ENCODE measurements at regions of chr4 and their contacts with region 1.

Region 1: DNA sequence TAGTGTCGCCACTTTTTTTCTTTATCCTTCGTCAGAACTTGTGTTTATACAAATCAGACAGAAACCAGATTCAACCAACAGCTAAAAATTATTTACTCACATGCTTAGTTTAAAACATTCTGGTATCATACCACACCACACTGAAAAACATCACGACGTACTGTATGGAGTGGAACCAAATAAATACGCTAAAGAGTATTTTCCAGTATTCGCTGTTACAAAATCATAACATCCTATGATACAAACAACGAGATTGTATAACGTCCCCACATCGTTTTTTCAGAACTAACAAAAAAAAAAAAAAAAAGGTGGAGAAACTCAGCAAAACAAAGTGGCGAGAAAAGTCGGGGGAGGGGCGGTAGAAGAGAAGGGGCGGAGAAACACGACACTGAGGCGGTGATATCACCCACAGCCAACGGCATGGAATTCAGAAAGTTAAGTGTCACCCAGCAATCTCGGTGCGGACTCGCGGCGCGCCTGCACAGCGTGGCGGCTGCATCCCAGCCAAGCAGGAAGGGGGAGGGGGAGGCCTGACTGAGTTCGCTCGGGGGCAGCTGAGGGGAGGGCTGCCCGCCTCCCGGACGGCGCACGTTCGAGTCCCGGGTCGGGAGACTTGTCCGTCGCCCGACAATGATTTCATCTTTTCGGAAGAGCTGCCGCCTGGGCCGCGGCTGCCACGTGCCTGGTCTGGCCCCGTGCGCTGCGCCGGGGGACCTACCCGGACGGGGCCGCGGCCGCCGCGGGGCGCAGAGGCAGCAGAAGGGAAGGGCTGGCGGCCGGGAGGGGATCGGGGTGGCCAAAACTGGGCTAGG is 920 bp downstream of the SETD7 start:
- DNase-seq: peak; percentile 93 to 96
- H3K4me3 ChIP-seq: peak overlapping the region; percentile 78 to 98
- H3K27ac ChIP-seq: peak overlapping the region; percentile 96 to 100
- H3K4me1 ChIP-seq: peaks cover 0 to 59% (median 34%) of the 10 kb centered on the region in 4 donors
- H3K27me3 ChIP-seq: no peaks in the 10 kb centered on the region
- CTCF ChIP-seq: peak in 1 of 2 experiments; percentile 5

Region 2: DNA sequence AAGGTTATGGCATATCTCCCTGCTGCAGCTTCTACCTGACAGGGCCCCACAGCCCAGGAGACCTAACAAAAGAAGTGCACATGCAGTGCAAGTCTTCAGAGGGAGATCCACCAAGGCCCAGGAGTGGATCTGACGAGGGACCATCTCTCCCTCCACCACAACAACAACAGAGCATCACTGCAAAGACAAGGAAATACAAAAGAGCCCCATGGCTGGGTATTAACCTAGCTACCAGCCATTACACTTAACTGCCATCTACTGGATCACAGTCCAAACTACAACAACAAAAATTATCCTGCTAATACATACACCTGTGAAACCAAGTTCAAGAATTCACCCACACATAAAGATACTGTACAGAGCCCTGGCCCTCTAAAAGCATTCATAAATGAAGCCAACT is 1032.7 kb before region 1 on chr4:
- intact Hi-C with region 1: no loop called
- DNase-seq: no peak
- H3K4me3 ChIP-seq: no peak overlapping the region
- H3K27ac ChIP-seq: no peak overlapping the region
- H3K4me1 ChIP-seq: no peaks in the 10 kb centered on the region
- H3K27me3 ChIP-seq: no peaks in the 10 kb centered on the region
- CTCF ChIP-seq: no peak

Region 3: DNA sequence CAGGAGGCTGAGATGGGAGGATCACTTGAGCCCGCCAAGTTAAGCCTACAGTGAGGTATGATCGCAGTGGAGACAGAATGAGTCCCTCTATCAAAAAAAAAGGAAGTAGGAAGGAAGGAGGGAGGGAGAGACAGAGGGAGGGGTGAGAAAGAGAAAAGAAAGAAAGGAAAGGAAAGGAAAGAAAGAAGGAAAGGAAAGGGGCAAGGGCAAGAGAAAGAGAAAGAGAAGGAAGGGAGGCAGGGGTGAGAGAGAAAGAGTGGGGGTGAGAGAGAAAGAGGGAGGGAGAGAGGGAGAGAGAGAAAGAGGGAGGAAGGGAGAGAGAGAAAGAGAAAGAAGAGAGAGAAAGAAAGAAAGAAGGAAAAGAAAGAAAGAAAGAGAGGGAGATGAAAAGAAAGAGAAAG is 391.3 kb before region 1 on chr4:
- intact Hi-C with region 1: no loop called
- DNase-seq: no peak
- H3K4me3 ChIP-seq: no peak overlapping the region
- H3K27ac ChIP-seq: no peak overlapping the region
- H3K4me1 ChIP-seq: peaks cover 0 to 88% (median 20%) of the 10 kb centered on the region in 4 donors
- H3K27me3 ChIP-seq: no peaks in the 10 kb centered on the region
- CTCF ChIP-seq: no peak

Region 4: DNA sequence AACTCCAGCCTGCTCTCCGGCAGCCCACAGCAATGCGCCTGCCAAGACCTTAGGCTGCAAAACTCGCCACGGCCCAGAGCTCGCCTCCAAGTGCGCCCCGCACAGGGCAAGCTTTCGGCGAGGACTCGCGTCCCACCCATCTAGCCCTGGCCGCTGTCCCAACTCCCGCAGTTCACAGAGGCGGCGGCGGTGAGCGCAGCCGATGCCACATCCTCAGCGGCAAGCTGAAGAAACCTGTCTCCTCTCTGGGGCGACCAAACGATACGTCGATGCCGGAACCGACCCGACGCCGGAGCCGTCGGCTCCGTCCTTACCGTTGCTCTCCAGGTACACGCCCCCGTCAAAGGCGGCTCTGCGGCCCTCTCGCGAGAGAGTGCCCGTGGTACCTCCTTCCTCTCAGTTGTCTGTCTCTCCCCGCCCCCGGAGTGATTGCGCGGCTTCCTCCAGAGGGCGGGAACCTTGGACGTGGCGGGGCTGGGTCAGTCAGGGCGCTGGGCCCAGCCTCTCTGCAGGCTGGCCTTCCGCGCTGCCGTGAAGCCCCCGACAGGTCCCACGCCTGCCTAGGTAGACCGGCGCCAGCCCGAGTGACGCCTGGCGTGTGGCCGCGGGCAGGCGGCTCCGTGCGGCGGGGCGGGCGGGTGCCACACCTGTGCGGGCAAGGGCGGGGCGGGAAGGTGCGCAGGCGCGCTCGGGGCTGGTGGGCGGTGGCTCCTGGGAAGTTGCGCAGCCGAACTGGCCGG is 101.6 kb before region 1 on chr4:
- intact Hi-C with region 1: loop called (anchors 5 kb)
- DNase-seq: peak; percentile 98 to 99
- H3K4me3 ChIP-seq: peak overlapping the region; percentile 78 to 82
- H3K27ac ChIP-seq: peak overlapping the region; percentile 89 to 91
- H3K4me1 ChIP-seq: peaks cover 0 to 49% (median 15%) of the 10 kb centered on the region in 4 donors
- H3K27me3 ChIP-seq: no peaks in the 10 kb centered on the region
- CTCF ChIP-seq: no peak

Region 5: DNA sequence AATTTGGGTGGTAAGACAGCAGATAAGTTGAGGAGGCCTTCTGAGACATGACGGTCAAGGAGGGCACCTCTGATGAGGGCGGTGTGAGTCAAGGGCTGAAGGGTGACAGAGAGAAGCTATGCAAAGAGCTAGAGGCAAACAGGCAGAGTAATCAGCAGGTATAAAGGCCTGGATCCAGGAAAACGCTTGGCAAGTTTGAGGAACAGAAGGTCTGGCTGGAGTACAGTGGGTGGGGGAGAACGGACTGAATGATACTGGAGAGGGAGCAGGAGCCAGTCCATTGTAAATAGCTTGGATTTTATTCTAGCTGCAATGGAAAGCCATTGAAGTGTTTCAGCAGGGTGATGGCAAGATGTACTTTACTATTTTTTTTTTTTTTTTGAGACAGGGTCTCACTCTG is 61.9 kb before region 1 on chr4:
- intact Hi-C with region 1: loop called (anchors 10 kb)
- DNase-seq: no peak
- H3K4me3 ChIP-seq: no peak overlapping the region
- H3K27ac ChIP-seq: no peak overlapping the region
- H3K4me1 ChIP-seq: peaks cover 0 to 4% (median 0%) of the 10 kb centered on the region in 4 donors
- H3K27me3 ChIP-seq: no peaks in the 10 kb centered on the region
- CTCF ChIP-seq: no peak